Right cardiac atrium (tissue), 5 donors: ENCODE measurements at regions of chr1 and their contacts with region 1.

Region 1: GRCh38 chr1:6409053-6409452 is 10.7 kb downstream of the HES2 start:
- DNase-seq: no peak
- ATAC-seq: no peak
- H3K4me3 ChIP-seq: no peak overlapping the region
- H3K27ac ChIP-seq: no peak overlapping the region
- H3K4me1 ChIP-seq: no peaks in the 10 kb centered on the region
- H3K27me3 ChIP-seq: no peaks in the 10 kb centered on the region

Region 2: DNA sequence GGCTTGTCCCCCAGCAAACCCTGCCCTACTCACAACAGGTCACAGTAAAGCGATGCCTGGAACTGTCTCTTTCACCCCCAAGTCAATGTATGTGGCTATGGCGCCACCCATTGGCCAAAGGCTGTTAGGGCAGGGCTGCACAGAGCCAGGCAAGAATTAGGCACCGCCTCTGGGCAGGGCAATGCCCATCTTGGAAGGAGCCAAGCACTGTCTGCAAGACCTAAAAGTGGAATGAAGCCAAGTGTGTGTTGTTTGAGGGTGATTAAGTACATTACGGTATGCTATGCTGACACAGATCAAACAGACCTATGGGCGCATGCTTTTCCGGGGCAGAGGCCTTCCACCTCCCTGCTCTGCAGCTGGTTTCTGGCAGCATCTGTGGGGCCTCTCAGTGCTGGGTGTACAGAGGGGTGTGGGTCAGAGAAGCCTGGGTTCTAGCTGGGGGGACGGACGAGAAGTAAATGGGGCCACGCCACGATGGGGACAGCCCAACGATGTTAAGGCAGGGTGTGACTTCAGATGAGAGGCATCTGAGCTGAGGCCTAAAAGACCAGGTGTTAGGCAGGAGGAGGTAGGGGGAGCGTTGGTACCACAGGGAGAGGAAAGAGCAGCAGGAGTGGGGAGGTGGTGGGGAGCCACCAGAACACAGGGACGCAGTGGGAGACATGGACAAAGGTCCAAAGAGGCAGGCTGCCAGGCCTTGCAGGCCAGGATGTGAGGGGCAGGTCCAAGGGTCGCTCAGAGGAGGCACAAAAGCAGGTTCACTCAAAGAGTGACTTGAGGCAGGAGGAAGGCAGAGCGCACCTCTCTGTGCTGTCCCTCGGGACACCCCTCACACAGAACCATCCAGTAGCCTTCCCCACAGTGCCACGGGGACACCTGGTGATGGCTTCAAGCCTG is 65.3 kb before region 1 on chr1:
- intact Hi-C with region 1: loop called in 1 of 4 experiments (anchors 5 kb)
- DNase-seq: peak; percentile 67 to 87 (median 85)
- ATAC-seq: peak; percentile 74 to 81
- H3K4me3 ChIP-seq: no peak overlapping the region
- H3K27ac ChIP-seq: no peak overlapping the region
- H3K4me1 ChIP-seq: no peaks in the 10 kb centered on the region
- H3K27me3 ChIP-seq: no peaks in the 10 kb centered on the region

Region 3: DNA sequence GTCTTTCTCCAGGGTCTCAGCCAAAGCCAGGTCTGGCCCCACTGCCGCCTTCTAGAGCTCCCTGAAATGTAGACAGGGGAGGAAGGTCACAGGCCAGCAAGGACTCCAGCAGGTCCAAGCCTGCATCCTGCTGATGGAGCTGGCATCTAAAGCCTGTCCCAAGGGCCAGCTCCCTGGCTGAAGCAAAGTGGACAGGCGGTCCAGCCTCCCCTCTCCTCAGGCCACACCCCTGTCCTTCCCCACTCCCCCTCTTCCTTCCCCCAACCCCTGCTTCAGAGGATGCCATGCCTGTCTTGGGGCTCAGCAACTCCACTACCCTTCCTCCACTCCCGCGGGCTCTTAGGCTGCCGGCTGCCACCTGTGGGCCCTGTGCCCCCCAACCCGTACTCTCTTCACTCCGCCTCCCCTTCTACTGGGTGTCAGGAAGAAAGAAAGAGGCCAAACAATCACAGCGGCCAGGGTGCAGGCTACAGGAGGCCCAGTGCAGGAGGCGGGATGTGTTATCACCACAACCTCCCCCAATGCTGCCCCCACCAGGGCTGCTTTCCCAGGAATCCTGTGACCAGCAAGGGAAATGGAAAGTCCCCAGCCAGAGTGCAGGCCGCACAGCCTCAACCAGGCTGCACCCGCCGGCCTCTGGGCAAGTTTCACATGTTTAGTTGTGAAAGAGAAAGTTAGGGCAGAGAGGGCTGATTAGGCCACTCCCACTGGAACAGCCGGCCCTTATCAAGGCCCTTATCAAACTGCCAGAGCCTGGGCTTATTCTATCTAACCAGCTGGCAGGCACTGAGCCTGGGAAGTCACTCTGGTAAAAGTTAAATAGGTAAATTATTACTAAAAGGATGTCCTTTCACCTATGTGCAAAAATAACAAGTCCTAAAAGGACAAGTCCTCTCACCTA is 49.6 kb before region 1 on chr1:
- intact Hi-C with region 1: loop called (anchors 5 to 10 kb)
- DNase-seq: peak; percentile 71 to 90 (median 84)
- ATAC-seq: peak; percentile 76 to 85
- H3K4me3 ChIP-seq: no peak overlapping the region
- H3K27ac ChIP-seq: peak overlapping the region; percentile 24
- H3K4me1 ChIP-seq: peaks cover 2% of the 10 kb centered on the region
- H3K27me3 ChIP-seq: no peaks in the 10 kb centered on the region

Region 4: DNA sequence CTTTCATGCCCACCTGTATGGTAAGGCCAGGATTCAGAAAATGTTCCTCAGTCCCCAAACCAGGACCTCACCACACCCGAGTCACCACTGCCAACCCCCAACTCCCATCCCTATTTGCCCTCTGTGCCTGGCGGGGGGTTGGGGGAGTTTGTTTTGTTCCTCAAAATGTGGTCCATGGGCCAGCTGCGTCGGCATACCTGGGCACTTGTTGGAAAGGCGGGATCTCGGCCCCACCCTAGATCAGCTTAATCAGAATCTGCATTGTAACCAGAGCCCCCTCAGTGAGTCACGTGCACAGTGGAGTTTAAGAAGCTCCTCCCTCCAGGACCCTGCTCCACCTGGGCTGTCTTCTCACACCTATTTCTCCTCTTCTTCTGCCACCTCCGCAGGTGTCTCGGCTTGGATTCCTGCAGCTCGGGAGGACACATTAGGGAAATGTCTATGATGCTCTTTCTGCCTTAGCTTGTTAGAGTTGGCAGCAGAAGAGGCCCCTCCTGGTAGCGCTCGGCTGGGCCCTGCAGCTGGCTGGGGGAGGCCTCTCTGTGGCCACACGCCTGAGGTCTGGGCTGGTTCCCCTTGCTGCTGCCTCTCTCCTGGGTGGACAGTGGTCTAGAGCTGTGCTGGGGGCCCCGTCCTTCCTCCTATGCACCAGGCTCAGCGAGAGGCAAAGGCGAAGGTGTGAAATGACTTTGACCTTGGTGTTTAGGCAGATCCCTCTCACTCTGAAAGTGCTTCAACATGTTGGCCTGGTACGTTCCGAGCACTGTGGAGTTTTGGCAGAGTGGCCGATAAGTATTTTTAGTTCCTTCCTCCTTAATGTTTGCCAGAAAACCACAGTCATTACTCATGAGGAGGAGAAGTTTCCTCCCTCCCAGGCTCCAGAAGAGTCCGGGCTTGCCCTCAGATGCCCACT is 334.4 kb after region 1 on chr1:
- intact Hi-C with region 1: no loop called
- DNase-seq: peak; percentile 47 to 75 (median 62)
- ATAC-seq: peak; percentile 91 to 95
- H3K4me3 ChIP-seq: no peak overlapping the region
- H3K27ac ChIP-seq: peak overlapping the region; percentile 82
- H3K4me1 ChIP-seq: peaks cover 4% of the 10 kb centered on the region
- H3K27me3 ChIP-seq: no peaks in the 10 kb centered on the region

Region 5: GRCh38 chr1:7281821-7282220 is 872.8 kb after region 1 on chr1:
- intact Hi-C with region 1: no loop called
- DNase-seq: no peak
- ATAC-seq: no peak
- H3K4me3 ChIP-seq: no peak overlapping the region
- H3K27ac ChIP-seq: no peak overlapping the region
- H3K4me1 ChIP-seq: no peaks in the 10 kb centered on the region
- H3K27me3 ChIP-seq: no peaks in the 10 kb centered on the region